Endothelial cell of umbilical vein (primary cell): ENCODE measurements at regions of chr7 and their contacts with region 1.

Region 1: DNA sequence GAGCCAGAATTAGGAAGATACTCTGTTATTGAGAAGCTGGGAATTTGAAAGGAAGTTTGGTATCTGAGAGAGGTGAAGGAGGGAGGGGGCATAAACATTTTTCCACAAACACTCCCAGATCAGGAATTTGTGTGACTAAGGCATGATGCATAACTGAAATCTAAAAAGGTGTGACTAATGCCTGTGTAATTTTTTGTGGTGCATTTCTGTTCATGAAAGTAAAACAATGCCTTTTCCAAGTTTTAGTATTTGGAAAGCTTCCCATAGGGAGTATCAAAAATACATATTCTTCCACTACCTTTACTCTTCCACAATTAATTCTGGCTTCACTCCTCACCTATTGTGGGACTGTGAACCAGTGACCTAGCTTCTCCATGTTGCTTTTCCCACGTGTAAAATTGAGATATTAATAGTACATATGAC is 56.4 kb upstream of the CAV2 start:
- DNase-seq: peak; percentile 91
- H3K4me3 ChIP-seq: no peak overlapping the region
- H3K27ac ChIP-seq: peak overlapping the region; percentile 93
- H3K4me1 ChIP-seq: peaks cover 35% of the 10 kb centered on the region
- H3K27me3 ChIP-seq: no peaks in the 10 kb centered on the region
- CTCF ChIP-seq: no peak
- POLR2A ChIP-seq: peak; percentile 50

Region 2: DNA sequence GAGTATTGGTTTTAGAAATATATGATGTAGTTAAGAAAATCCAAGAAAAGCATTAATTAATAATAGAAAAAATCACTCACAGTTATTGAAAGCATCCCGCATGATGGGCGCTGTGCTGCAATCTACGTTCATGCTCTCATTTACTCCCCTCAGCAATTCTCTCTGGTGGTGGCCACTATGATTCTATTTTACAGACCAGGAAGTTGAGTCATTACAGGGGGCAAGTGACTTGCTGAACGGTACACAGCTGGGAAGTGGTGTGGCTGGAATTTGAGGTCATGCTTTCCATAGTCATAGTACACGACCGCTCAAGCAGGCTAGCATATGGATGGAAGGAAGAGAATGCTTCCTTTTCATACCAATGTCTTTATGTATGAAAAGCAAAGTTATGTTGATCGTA is 115.4 kb before region 1 on chr7:
- CTCF ChIA-PET with region 1: no interaction called
- POLR2A ChIA-PET with region 1: no interaction called
- dilution Hi-C with region 1: no loop called
- intact Hi-C with region 1: loop called (anchors 1 kb)
- DNase-seq: peak; percentile 97
- H3K4me3 ChIP-seq: peak overlapping the region; percentile 43 to 99 (median 98)
- H3K27ac ChIP-seq: peak overlapping the region; percentile 97
- H3K4me1 ChIP-seq: peaks cover 48% of the 10 kb centered on the region
- H3K27me3 ChIP-seq: no peaks in the 10 kb centered on the region
- CTCF ChIP-seq: no peak
- POLR2A ChIP-seq: peak; percentile 97

Region 3: GRCh38 chr7:116426428-116427156 is 16.5 kb before region 1 on chr7:
- CTCF ChIA-PET with region 1: interaction called, 12 read pairs
- POLR2A ChIA-PET with region 1: interaction called, 5 read pairs
- dilution Hi-C with region 1: no loop called
- intact Hi-C with region 1: loop called (anchors 1 kb)
- DNase-seq: peak; percentile 98
- H3K4me3 ChIP-seq: no peak overlapping the region
- H3K27ac ChIP-seq: peak overlapping the region; percentile 91
- H3K4me1 ChIP-seq: peaks cover 26% of the 10 kb centered on the region
- H3K27me3 ChIP-seq: no peaks in the 10 kb centered on the region
- CTCF ChIP-seq: no peak
- POLR2A ChIP-seq: peak; percentile 65

Region 4: DNA sequence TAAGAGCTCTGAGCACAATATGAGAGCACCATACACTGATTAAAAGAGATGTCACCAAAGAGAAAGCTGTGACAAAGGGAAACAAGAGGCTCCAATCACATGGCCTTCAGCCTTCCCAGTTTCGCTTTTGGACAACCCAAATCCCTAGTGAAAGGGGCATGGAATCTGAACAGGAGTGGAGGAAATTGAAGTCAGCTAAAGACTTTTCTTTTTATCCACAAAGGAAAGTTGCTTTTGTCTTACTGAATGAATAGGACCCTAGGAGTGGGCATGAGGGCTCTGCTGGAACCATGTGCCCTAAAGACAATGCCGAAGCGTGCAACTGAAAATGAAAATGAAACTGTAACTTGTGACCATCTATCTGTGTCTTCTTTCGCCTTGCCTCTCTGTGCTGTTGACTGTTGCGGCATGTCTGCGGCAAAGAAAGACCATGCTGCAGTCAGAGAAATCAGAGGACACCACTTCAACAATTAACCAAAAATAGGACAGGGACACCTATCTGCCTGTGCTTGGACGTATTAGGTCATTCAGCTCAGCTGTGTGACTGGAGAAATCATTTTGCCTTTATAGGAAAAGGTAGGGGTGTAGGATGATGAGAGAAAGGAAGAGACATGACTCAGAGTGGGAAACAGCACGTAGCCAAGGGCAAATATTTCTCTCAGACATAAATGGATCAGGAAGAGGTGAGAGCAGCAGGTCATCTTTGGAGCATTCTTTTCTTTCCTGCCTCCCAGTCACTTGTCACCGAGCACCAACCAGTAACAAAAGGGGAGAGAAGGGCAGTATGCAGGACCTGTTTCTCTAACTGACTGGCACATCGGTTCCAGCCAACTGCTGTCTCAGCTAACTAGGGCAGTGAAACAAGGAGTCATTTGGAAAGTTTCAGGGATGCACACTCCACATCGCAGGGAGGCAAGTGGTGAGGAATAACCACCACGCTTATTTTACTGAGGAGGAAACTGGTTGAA is 68.7 kb after region 1 on chr7:
- CTCF ChIA-PET with region 1: interaction called, 5 read pairs
- POLR2A ChIA-PET with region 1: no interaction called
- dilution Hi-C with region 1: no loop called
- intact Hi-C with region 1: loop called (anchors 1 kb)
- DNase-seq: peak; percentile 96
- H3K4me3 ChIP-seq: peak overlapping the region; percentile 32 to 70 (median 45)
- H3K27ac ChIP-seq: peak overlapping the region; percentile 96
- H3K4me1 ChIP-seq: peaks cover 54% of the 10 kb centered on the region
- H3K27me3 ChIP-seq: no peaks in the 10 kb centered on the region
- CTCF ChIP-seq: no peak
- POLR2A ChIP-seq: peak; percentile 76

Region 5: GRCh38 chr7:117143580-117143979 is 700.5 kb after region 1 on chr7:
- CTCF ChIA-PET with region 1: no interaction called
- POLR2A ChIA-PET with region 1: no interaction called
- dilution Hi-C with region 1: no loop called
- intact Hi-C with region 1: no loop called
- DNase-seq: peak; percentile 57
- H3K4me3 ChIP-seq: no peak overlapping the region
- H3K27ac ChIP-seq: peak overlapping the region; percentile 51
- H3K4me1 ChIP-seq: peaks cover 24% of the 10 kb centered on the region
- H3K27me3 ChIP-seq: no peaks in the 10 kb centered on the region
- CTCF ChIP-seq: no peak
- POLR2A ChIP-seq: no peak